ENCODE measurements at regions of chr11 and their contacts with region 1.

Region 1: GRCh38 chr11:125625630-125626287 is 796 bp downstream of the CHEK1 start:
- DNase-seq: peak; percentile 92

Region 2: DNA sequence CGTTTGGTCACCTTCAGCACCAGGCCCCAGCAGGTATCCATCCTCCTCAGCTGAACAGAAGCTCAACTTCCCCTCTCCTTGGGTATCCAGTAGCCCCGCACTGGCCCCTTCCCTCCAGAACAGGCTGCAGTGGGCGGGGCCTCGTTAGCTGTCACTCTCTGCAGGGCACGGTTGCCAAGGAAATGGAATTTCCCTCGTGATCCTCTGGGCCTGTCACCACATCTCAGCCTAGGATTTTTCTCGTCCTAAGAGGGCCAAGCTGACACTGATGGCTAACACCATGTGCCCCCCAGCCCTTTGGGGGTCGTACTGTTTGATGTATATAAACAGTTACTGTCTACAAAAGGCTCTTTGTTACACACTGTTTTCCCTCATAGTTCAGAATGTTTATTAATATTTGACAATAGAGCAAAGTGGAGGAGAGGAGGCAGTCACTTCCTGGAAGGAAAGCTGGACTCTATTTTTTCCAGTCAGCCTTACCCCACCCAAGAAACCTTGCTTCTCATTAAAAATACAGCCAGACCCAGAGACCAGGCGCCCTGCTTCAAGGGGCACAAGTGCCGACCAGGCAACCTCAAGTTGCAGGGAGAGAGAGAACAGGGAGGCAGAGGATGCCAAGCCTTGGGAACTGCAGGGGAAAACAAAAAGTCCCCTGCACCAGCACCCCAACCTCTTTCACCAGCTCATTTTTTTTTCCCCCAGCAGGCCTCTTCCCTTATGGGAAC is 174.2 kb before region 1 on chr11:
- intact Hi-C with region 1: no loop called
- DNase-seq: no peak

Region 3: DNA sequence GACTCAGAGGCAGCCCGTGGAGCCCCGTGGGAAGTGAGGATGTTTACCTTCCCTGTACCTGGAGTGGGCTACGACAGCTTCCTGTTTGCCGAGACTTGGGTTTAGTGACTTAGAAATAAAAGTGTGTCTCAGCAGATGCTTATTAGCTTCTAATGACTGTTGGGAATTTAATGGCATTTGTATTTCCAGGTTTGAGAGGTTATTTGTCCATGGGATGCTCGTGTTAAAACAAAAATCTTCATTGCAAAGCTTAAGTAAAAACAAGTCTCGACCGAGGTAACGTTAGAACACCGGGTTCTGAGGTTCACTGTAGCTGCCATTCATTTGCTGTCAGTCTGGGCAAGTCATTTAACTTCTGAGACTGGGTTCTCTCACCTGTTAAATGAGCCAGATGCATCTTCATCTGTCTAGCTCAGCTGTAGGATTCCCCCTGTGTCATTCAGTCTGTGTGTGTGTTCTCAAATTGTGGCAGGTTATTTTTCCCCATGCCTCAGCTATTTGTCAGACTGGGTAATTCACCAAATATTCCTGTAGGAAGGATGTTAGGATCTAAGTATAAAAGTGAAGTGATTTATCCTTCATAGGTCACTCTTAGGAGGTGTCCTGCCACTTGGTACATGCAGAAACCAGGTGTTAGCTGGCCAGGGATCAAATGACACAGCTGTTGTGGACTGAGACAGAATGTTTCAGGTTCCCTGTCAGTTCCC is 55.7 kb before region 1 on chr11:
- intact Hi-C with region 1: loop called (anchors 2 kb)
- DNase-seq: no peak

Region 4: GRCh38 chr11:125592305-125593112 is 33.2 kb before region 1 on chr11 and contains the start of gene STT3A:
- intact Hi-C with region 1: loop called (anchors 2 kb)
- DNase-seq: peak; percentile 100
- total RNA-seq, gene STT3A: 57.8 TPM

Region 5: GRCh38 chr11:125874556-125875124 is 248.9 kb after region 1 on chr11:
- intact Hi-C with region 1: loop called (anchors 5 kb)
- DNase-seq: no peak

Measured in cardiac septum (tissue), 1 donor.